Dendritic cell treated with granulocyte-macrophage colony-stimulating factor and Interleukin-4, amounts not matched to agents 40 ng/mL and 50 ng/mL, for 4 days (primary cell): ENCODE measurements at regions of chr16 and their contacts with region 1.

Region 1: GRCh38 chr16:89793955-89794354 is 22.5 kb downstream of the FANCA start:
- H3K4me3 Mint-ChIP-seq: no peak overlapping the region
- H3K27ac Mint-ChIP-seq: no peak overlapping the region
- H3K4me1 Mint-ChIP-seq: no peaks in the 10 kb centered on the region
- H3K27me3 Mint-ChIP-seq: no peaks in the 10 kb centered on the region

Region 2: DNA sequence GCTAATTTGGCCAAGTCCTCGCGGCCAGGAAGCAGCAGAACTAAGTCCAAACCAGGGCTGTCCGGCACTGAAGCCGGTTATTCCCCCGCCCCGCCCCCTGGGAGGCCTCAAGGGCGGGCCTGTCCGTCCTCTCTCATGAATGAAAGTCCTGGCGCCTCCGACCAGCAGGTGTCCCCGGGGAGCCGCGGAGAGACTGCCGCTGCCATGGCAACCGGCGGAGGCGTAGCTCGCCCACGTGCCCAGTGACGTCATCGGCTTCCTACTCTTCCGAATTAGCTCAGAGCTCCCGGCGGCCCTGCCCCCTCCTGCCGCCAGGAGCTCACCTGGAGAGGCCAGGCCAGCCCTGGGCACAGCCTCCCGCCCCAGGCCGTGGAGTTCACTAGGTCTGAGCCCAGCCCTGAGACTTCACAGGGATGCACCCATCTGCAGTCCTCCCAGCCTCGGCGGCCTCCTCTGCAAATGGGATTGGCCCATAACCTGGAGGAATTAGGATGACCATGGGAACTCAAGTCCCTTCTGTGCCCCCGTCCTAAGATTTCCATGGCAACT is 93.8 kb before region 1 on chr16:
- intact Hi-C with region 1: loop called (anchors 1 kb)
- H3K4me3 Mint-ChIP-seq: peak overlapping the region; percentile 78
- H3K27ac Mint-ChIP-seq: peak overlapping the region; percentile 73
- H3K4me1 Mint-ChIP-seq: peaks cover 30% of the 10 kb centered on the region
- H3K27me3 Mint-ChIP-seq: peaks cover 14% of the 10 kb centered on the region

Region 3: DNA sequence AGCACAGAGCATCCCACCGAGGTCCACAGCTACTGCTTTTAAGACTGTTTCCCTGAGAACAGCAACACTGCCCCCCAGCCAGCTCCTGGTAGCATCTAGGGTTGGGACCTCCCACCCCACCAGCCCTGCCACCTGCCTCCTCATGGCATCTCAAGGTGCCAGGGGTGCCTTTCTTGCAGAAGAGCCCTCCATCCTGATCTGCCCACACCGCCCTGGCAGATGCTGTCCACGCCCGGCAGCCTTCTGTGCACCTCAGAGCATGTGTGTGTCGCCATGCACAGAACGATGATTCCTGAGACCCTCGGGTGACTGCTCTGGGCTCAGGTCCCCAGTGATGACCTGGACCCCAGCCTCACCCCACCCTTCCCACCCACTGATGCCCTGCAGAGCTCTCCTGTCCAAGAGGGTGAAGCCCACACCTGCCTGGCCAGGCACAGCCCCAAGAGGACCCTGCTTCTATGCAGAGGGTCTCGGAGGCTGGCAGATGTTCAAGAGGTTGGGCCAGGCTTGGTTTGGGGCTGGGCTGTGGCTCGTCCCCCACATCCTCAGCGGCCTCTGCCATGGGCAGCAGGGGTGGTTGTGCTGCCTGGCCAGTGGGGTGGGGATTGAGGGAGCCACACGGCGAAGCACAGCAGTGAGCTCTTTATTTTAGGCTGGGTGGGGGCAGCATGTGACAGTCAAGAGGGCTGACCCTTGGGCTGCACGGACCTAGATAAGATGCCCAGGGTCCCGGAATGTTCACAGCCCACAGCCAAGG is 87.3 kb before region 1 on chr16:
- intact Hi-C with region 1: loop called (anchors 1 kb)
- H3K4me3 Mint-ChIP-seq: no peak overlapping the region
- H3K27ac Mint-ChIP-seq: peak overlapping the region; percentile 25
- H3K4me1 Mint-ChIP-seq: peaks cover 39% of the 10 kb centered on the region
- H3K27me3 Mint-ChIP-seq: peaks cover 18% of the 10 kb centered on the region

Region 4: DNA sequence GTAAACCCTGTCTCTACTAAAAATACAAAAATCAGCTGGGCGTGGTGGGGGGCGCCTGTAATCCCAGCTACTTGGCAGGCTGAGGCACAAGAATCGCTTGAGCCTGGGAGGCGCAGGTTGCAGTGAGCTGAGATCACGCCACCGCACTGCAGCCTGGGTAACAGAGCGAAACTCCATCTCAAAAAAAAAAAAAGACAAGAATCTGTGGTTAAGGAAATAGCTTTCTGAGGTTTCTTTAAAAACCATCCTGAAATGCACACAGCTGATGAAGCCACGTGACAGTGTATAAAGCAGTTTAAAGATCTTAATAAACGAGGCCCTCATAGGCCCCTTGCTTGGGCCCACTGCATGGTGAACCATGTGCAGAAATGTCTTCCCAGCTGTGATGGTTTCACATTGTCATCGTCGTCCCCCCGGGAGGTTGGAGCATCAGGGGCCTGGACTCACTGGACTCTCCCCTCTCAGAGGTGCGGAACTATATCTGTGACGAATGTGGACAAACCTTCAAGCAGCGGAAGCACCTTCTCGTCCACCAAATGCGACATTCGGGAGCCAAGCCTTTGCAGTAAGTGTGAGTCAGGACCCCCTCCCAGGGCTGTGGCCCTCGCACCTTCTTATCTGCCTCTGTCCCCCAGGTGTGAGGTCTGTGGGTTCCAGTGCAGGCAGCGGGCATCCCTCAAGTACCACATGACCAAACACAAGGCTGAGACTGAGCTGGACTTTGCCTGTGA is 56.4 kb before region 1 on chr16:
- intact Hi-C with region 1: no loop called
- H3K4me3 Mint-ChIP-seq: no peak overlapping the region
- H3K27ac Mint-ChIP-seq: no peak overlapping the region
- H3K4me1 Mint-ChIP-seq: peaks cover 27% of the 10 kb centered on the region
- H3K27me3 Mint-ChIP-seq: no peaks in the 10 kb centered on the region

Region 5: GRCh38 chr16:89815639-89816348 is 21.8 kb after region 1 on chr16:
- intact Hi-C with region 1: no loop called
- H3K4me3 Mint-ChIP-seq: peak overlapping the region; percentile 74
- H3K27ac Mint-ChIP-seq: no peak overlapping the region
- H3K4me1 Mint-ChIP-seq: peaks cover 26% of the 10 kb centered on the region
- H3K27me3 Mint-ChIP-seq: no peaks in the 10 kb centered on the region

Region 6: GRCh38 chr16:89873972-89874689 is 80.2 kb after region 1 on chr16:
- intact Hi-C with region 1: no loop called
- H3K4me3 Mint-ChIP-seq: peak overlapping the region; percentile 97
- H3K27ac Mint-ChIP-seq: peak overlapping the region; percentile 100
- H3K4me1 Mint-ChIP-seq: peaks cover 26% of the 10 kb centered on the region
- H3K27me3 Mint-ChIP-seq: no peaks in the 10 kb centered on the region